Activated CD4-positive, alpha-beta memory T cell treated with anti-CD3 and anti-CD28 coated beads, Interleukin-2, amount 10 ng/mL, durations not matched to agents 7 days and 5 days (primary cell): ENCODE measurements at regions of chr10 and their contacts with region 1.

Region 1: DNA sequence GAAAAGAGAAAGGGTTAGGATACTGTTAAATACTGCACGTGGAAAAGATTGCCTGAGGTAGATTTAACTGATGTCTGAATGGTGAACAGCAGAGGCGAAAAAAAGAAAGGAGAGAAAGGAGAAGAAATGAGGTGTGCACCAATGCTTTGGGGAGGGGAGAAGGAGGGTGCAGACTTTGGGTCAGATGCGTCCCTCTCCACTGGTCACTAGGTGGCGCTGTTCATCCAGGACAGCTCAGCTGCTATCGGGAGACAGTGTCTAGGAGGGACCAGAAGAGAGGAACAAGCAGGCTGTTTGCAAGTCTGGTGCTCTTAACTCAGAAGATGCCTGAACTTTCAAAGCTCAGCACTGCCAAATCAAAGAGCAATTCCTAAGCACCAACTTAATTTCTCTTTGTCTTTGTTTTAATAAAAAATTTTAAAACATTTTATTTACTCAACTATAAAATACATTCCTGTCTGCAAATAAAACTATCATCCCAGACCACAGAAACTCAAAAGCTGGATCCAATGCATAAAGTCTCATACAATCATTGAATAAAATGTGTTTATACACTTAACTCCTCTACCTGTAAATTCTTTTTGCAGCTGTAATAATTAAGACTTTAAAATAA is 83.9 kb upstream of the PDLIM1 start:
- DNase-seq: peak; percentile 76
- H3K4me3 Mint-ChIP-seq: no peak overlapping the region
- H3K27ac Mint-ChIP-seq: no peak overlapping the region
- H3K4me1 Mint-ChIP-seq: peaks cover 5% of the 10 kb centered on the region
- H3K27me3 Mint-ChIP-seq: peaks cover 32% of the 10 kb centered on the region

Region 2: DNA sequence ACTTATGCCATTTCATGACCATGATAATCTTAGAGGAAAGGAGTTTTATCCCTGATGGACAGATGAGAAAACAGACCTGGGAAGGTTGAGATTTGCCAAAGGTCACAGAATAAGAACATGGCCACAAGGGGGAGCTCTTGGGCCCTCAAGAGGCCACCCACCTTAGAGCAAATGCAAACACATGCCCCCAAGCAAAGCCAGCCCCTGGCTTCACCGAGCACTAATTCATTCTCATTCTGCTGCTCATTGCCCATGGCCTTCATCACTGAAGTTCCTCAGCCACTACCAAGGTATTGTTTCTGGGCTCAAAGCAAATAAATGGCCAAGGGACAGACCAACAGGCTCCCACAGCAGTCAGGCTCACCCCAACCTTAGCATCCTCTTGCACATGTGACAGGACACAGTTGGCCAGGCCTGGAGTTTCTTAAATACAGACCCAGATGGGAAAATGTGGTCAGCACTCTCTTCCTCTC is 128.1 kb before region 1 on chr10:
- CTCF ChIA-PET with region 1: interaction called, 13 read pairs
- POLR2A ChIA-PET with region 1: no interaction called
- DNase-seq: peak; percentile 68
- H3K4me3 Mint-ChIP-seq: no peak overlapping the region
- H3K27ac Mint-ChIP-seq: no peak overlapping the region
- H3K4me1 Mint-ChIP-seq: peaks cover 38% of the 10 kb centered on the region
- H3K27me3 Mint-ChIP-seq: peaks cover 4% of the 10 kb centered on the region

Region 3: GRCh38 chr10:95391581-95392216 is 17.0 kb after region 1 on chr10:
- CTCF ChIA-PET with region 1: interaction called, 24 read pairs
- POLR2A ChIA-PET with region 1: no interaction called
- DNase-seq: no peak
- H3K4me3 Mint-ChIP-seq: no peak overlapping the region
- H3K27ac Mint-ChIP-seq: no peak overlapping the region
- H3K4me1 Mint-ChIP-seq: peaks cover 11% of the 10 kb centered on the region
- H3K27me3 Mint-ChIP-seq: no peaks in the 10 kb centered on the region

Region 4: DNA sequence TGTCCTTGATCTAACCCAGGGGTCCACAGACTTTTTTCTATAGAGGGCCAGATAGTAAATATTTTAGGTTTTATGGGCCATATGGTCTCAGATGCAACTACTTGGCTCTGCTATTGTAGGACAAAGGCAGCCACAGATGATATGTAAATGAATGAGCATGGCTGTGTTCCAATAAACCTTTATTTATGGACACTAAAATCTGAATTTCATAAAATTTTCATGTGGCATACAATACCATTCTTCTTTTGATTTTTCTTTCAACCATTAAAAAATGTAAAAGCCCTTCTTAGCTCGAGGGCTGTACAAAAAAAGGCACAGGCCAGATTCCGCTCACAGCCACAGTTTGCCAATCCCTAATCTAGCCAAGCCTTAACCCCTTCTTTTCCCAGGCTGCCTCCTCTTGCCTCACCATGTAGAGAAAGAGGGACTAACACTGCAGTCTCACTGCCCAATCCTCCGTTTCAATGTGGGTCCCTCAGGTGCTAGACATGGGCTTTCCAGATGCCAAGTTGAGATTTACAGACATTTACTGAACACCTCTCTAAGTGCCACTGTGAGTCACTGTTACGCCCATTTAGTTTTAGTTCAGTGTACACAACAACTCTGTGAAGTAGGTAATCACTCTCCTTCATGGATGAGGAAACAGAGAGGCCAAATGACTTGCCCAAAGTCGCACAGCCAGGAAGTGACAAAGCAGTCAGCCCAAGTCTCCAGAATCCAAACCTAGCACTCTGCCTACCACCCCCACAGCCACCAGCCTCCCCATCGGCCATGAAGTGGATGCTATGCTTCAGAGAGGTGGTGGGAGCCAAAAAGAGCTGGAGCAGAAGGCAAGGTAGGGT is 48.7 kb after region 1 on chr10:
- CTCF ChIA-PET with region 1: no interaction called
- POLR2A ChIA-PET with region 1: no interaction called
- DNase-seq: no peak
- H3K4me3 Mint-ChIP-seq: no peak overlapping the region
- H3K27ac Mint-ChIP-seq: no peak overlapping the region
- H3K4me1 Mint-ChIP-seq: no peaks in the 10 kb centered on the region
- H3K27me3 Mint-ChIP-seq: peaks cover 7% of the 10 kb centered on the region

Region 5: DNA sequence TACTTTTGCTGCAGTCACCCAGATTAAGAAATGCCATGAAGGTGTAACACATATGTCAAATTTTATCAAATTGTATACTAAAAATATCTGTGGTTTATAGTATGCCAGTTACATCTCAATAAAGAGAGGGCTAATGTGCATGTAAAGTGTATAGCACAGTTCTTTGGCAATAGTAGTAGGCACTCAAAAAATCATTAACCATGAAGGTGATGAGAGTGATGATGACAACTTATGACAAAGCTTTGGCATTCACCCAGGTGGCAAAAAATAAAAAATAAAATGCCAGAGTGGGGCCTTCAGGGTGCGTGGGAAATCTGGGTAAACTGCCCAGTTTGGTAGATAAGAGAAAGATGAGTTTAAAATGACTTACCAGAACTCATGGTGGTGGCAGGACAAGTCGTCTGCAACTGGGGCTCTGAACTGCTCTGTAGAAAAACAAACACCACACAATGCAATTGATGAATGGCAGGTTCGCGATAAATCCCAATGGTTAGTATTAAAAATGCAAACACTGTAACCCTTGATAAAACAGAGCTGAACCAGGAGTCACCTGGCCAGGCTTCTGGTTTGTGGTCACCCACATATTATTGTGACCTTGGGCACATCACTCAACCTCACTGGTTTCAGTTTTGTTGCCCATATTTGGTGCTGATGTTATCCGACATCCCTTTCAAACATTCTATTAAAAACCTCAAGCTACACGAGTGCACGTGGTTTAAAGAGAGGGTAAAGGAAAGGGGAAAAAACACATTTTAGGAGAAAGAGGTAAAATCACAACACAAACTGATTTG is 66.2 kb after region 1 on chr10:
- CTCF ChIA-PET with region 1: interaction called, 20 read pairs
- POLR2A ChIA-PET with region 1: interaction called, 3 read pairs
- DNase-seq: peak; percentile 49
- H3K4me3 Mint-ChIP-seq: no peak overlapping the region
- H3K27ac Mint-ChIP-seq: no peak overlapping the region
- H3K4me1 Mint-ChIP-seq: peaks cover 13% of the 10 kb centered on the region
- H3K27me3 Mint-ChIP-seq: peaks cover 17% of the 10 kb centered on the region

Region 6: DNA sequence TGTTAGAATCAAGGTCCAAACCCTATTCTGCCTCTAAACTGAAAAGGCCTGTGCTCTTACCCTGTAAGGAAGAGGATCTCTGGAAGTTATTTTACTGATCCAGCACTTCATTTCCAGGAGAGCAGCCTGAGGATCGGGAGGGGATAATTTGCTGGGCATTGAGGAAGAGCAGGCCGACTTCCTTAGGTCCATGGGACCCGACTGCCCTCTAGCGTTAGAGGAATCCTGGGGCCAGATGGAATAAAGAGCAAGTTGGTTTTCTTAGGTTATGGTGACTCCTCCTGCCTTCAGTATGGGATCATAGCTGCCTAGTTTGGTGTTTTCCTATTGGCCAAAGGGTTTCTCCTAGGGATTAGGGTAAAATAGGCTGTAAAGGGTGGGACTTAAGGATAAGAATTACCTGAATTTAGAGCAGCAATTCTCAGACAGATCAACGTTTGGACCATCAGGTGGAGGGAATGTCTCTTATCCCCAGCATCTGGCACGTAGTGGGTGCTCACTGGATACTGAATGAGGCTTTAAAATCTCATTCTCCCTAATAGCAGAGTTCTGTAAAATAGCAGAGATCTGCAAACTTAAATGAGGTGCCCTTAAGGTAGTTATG is 226.5 kb after region 1 on chr10:
- CTCF ChIA-PET with region 1: interaction called, 16 read pairs
- POLR2A ChIA-PET with region 1: no interaction called
- DNase-seq: peak; percentile 47
- H3K4me3 Mint-ChIP-seq: no peak overlapping the region
- H3K27ac Mint-ChIP-seq: no peak overlapping the region
- H3K4me1 Mint-ChIP-seq: no peaks in the 10 kb centered on the region
- H3K27me3 Mint-ChIP-seq: peaks cover 6% of the 10 kb centered on the region